Calu3 (cell line): ENCODE measurements at regions of chr9 and their contacts with region 1.

Region 1: DNA sequence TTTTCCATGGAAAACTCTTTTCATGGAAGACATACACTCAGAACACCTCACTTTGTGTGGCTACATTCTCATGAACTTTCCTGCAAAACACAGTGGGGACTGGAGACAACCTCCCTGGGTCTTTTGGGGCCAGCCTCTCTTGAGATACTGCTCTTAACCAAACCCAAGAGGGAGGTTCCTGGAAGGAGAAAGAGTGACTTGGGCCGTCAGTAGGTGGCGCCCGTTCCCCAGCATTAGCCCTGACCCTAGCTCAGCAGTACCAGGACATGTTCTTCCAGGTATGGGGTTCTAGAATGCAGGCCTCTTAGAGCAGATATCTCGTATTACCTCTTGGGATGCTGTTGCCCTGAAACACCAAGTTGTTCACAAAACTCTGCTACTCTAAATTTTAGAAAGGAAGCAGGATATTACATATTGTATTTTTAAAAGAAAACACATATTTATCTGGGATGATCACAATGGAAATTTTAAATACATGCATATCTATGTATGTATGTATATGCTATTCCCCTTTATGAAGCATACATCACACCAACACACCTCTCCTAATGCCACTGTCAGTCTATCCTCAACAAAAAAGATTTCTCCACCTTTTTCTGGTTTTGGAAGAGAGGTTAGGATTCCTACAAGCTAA is 15.8 kb upstream of the GLIS3 start:
- DNase-seq: peak; percentile 81
- H3K4me3 Mint-ChIP-seq: no peak overlapping the region
- H3K27ac Mint-ChIP-seq: no peak overlapping the region
- H3K4me1 Mint-ChIP-seq: peaks cover 8% of the 10 kb centered on the region
- H3K27me3 Mint-ChIP-seq: no peaks in the 10 kb centered on the region
- CTCF ChIP-seq: peak; percentile 74

Region 2: DNA sequence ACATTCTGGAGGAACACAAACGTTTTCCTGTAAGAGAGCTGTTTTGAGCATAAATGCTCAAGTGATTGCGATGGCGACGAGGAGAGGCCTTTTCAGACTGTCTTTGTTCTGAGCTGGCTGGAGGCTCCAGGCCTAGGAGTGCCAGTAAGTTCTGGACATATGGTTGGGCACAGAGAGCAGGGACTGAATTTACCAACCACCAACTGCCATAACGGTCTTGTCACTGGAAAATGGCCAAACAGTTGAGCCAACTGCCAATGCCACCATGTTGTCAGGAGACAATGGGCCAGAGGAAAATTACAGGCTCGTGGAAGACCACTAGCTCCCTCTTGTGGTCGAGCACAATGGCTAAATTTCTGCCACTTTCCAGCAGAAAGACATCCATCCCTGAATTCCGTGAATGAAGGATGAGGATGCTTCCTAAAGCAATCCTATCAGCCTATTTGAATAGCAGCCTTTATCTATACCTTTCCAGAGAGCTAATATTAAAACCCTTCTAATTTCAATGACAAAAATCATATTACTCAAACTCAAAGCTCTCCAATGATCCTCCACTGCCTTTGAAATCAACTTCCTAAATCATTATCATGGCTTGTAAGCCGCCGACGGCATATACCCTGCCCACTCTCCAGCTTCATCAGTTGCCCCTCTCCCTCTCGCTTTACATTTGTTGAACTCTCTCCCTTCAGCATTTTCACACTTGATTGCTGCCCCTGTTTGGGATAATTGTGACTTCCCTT is 51.1 kb after region 1 on chr9:
- CTCF ChIA-PET with region 1: interaction called, 7 read pairs
- intact Hi-C with region 1: loop called (anchors 1 kb)
- DNase-seq: peak; percentile 42
- H3K4me3 Mint-ChIP-seq: no peak overlapping the region
- H3K27ac Mint-ChIP-seq: no peak overlapping the region
- H3K4me1 Mint-ChIP-seq: peaks cover 4% of the 10 kb centered on the region
- H3K27me3 Mint-ChIP-seq: no peaks in the 10 kb centered on the region
- CTCF ChIP-seq: peak; percentile 68